ENCODE measurements at regions of chr7 and their contacts with region 1.

Region 1: DNA sequence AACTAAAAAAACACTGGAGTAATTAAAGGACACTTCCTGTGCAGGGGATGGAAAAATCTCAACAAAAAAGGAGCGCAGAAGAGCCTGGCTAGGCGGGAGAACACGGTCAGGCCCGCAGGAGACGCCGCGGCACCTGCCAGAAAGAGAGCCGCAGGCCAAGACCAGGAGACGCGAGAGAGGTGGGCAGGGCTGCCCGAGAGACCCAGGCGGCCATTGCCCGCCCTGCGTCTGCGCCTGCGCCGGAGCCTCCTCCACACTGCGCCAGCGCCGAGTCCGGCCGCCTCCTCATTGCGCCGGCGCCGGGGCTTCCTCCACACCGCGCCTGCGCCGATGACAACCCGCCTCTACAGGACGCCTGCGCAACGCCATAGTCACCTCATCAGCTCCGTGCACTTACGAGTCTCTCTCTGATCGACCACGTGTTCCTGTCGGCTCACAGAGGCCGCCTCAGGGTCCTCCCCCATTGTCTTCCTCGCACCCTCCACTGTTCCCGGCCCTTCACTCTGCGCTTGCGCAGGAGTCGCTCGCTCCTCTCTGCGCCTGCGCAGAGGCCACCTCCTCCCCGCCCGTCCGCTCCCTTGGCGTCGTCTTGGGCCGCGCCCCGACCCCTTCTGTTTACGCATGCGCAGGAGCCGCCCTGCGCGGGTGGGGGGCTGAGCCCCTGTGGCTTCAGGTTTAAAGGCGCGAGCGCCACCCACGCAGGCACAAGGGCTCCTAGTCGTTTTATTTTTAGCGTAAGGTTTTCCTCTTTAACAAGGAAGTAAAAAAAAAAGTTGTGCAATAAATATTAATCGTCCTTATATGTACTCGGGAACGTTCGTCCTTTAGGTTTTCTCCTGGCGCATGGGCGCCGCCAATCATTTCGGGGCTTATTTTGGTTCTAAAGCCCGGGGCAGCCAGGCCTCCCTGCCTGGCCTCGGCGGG is 43.2 kb upstream of the FAM20C start:
- DNase-seq: peak; percentile 97
- H3K4me3 ChIP-seq: peak overlapping the region; percentile 64
- H3K27me3 ChIP-seq: no peaks in the 10 kb centered on the region
- CTCF ChIP-seq: no peak

Region 2: DNA sequence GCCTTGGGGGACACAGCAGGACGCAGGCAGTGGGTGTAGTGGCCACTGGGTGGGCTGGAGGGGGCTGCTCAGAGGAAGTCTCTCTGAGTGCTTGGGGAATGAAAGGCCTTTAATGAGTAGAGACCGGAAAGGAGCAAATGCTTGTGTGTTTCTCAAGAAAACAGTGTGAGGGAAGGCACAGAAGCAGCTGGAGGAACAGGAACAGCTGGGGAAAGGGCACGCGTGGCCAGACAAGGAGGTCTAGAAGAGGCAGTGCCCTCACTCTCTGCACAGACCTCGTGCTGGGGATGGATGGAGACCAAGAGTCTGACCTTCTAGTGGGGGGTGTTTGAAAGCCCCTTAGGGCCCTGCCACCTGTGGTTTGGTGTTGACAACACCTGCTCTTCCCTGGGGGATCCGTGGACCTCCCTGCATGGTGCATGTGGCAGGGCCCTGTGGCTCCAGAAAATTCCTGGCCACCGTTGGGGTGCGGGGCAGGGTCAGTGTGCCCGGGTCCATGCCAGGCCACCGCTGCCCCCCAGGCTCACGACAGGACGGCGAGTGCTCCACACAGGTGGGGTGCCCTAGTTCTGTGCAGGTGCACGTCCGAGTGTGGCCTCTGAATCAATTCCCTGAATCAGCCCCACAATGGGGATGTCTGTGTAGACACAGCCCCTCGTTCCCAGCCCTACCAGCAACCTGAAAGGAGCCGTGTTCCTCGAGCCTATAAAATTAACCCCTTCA is 17.3 kb after region 1 on chr7:
- CTCF ChIA-PET with region 1: interaction called, 3 read pairs
- POLR2A ChIA-PET with region 1: interaction called, 12 read pairs
- DNase-seq: no peak
- H3K4me3 ChIP-seq: no peak overlapping the region
- H3K27me3 ChIP-seq: peaks cover 17% of the 10 kb centered on the region
- CTCF ChIP-seq: no peak

Region 3: GRCh38 chr7:318878-319661 is 169.9 kb after region 1 on chr7:
- CTCF ChIA-PET with region 1: no interaction called
- POLR2A ChIA-PET with region 1: no interaction called
- DNase-seq: no peak
- H3K4me3 ChIP-seq: no peak overlapping the region
- H3K27me3 ChIP-seq: peaks cover 17% of the 10 kb centered on the region
- CTCF ChIP-seq: no peak